Dendritic cell treated with granulocyte-macrophage colony-stimulating factor and Interleukin-4, amounts not matched to agents 40 ng/mL and 50 ng/mL, for 4 days (primary cell): ENCODE measurements at regions of chr6 and their contacts with region 1.

Region 1: DNA sequence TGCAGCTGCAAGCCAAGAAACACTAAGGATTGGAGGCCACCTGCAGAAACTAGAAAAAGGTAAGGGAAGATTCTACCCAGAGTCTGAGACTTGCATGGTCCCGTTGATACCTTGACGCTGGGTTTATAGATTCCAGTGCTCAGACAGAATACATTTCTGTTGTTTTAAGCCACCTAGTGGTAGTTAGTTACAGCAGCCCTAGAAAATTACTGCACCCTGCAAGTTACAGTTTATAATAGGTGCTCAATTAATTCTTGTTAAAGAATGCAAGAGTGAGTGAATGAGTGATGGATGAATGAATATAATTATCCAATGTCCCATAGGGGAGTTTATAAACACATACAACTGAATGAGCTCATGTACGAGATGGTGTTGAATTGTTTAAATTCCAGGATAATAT is 453.1 kb upstream of the SLC35B3 start:
- H3K4me3 Mint-ChIP-seq: no peak overlapping the region
- H3K27ac Mint-ChIP-seq: no peak overlapping the region
- H3K4me1 Mint-ChIP-seq: peaks cover 9% of the 10 kb centered on the region
- H3K27me3 Mint-ChIP-seq: no peaks in the 10 kb centered on the region

Region 2: GRCh38 chr6:8131256-8131897 is 757.1 kb before region 1 on chr6:
- intact Hi-C with region 1: loop called (anchors 5 kb)
- H3K4me3 Mint-ChIP-seq: no peak overlapping the region
- H3K27ac Mint-ChIP-seq: no peak overlapping the region
- H3K4me1 Mint-ChIP-seq: peaks cover 16% of the 10 kb centered on the region
- H3K27me3 Mint-ChIP-seq: peaks cover 4% of the 10 kb centered on the region

Region 3: GRCh38 chr6:8707956-8708772 is 180.3 kb before region 1 on chr6:
- intact Hi-C with region 1: loop called (anchors 2 kb)
- H3K4me3 Mint-ChIP-seq: no peak overlapping the region
- H3K27ac Mint-ChIP-seq: no peak overlapping the region
- H3K4me1 Mint-ChIP-seq: no peaks in the 10 kb centered on the region
- H3K27me3 Mint-ChIP-seq: no peaks in the 10 kb centered on the region

Region 4: GRCh38 chr6:8845690-8846089 is 42.8 kb before region 1 on chr6:
- intact Hi-C with region 1: no loop called
- H3K4me3 Mint-ChIP-seq: no peak overlapping the region
- H3K27ac Mint-ChIP-seq: no peak overlapping the region
- H3K4me1 Mint-ChIP-seq: no peaks in the 10 kb centered on the region
- H3K27me3 Mint-ChIP-seq: no peaks in the 10 kb centered on the region

Region 5: GRCh38 chr6:8860671-8861070 is 27.8 kb before region 1 on chr6:
- intact Hi-C with region 1: no loop called
- H3K4me3 Mint-ChIP-seq: no peak overlapping the region
- H3K27ac Mint-ChIP-seq: no peak overlapping the region
- H3K4me1 Mint-ChIP-seq: no peaks in the 10 kb centered on the region
- H3K27me3 Mint-ChIP-seq: no peaks in the 10 kb centered on the region

Region 6: DNA sequence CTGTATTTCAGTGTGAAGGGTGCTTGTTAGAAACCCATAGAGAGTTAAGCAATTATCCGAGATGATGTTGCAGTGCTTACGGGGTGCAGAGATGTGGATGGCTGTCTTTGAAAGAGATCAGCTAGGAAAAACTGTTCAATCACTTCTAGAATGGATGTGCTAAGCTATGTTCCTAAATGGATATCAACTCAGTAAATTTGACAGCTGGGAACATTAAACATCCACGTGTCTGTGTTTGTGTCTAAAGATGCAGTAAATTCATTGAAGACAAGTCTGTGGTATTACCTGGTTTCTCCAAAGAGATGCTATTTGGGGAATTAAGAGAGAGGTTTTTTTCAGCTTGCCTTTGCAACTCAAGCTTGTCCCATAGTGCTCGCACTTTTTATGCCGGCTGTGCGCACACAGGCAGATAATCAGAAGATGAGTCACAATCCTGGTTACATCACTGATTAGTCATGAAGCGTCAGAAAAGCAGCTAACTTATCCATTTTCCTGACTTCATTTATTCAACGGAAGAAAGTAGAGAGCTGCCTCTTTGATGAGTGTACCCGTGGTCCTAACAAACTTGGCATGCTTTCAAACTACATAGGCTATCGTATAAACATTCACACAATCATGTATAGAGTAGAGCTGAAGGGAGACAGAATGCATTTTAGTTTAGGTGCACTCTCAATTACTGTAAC is 238.6 kb after region 1 on chr6:
- intact Hi-C with region 1: no loop called
- H3K4me3 Mint-ChIP-seq: no peak overlapping the region
- H3K27ac Mint-ChIP-seq: no peak overlapping the region
- H3K4me1 Mint-ChIP-seq: no peaks in the 10 kb centered on the region
- H3K27me3 Mint-ChIP-seq: peaks cover 2% of the 10 kb centered on the region

Region 7: GRCh38 chr6:10824297-10824696 is 1935.8 kb after region 1 on chr6:
- intact Hi-C with region 1: no loop called
- H3K4me3 Mint-ChIP-seq: no peak overlapping the region
- H3K27ac Mint-ChIP-seq: no peak overlapping the region
- H3K4me1 Mint-ChIP-seq: no peaks in the 10 kb centered on the region
- H3K27me3 Mint-ChIP-seq: no peaks in the 10 kb centered on the region